ENCODE measurements at regions of chr22 and their contacts with region 1.

Region 1: DNA sequence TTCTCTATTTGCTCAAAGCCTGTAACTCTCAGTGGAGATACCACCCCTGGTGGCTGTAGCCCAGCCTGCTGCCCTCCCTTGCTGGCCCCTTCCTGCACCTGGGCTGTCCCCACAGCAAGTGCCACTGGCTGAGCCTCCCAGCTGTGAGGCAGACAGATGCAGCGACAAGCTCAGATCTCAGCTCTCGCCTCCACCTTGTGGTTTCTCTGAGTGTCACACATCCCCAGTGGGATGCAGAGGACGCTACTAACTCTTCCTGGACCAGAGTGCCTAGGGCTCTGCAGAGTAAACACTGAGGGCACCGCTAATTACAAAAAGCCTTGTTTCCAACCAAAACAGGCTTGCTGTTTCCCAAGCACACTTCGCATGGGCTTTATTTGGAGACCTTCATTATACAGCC is 8.9 kb downstream of the YPEL1 start:
- DNase-seq: peak in 6 of 9 experiments; percentile 30 to 70 (median 52)
- ATAC-seq: peak; percentile 89
- H3K4me3 ChIP-seq: no peak overlapping the region
- H3K4me3 Mint-ChIP-seq: no peak overlapping the region
- H3K27ac ChIP-seq: peak overlapping the region in 1 of 2 experiments; percentile 6
- H3K27ac Mint-ChIP-seq: no peak overlapping the region
- H3K4me1 ChIP-seq: no peaks in the 10 kb centered on the region
- H3K4me1 Mint-ChIP-seq: peaks cover 7% of the 10 kb centered on the region
- H3K27me3 ChIP-seq: no peaks in the 10 kb centered on the region
- H3K27me3 Mint-ChIP-seq: no peaks in the 10 kb centered on the region
- CTCF ChIP-seq: peak; percentile 46

Region 2: DNA sequence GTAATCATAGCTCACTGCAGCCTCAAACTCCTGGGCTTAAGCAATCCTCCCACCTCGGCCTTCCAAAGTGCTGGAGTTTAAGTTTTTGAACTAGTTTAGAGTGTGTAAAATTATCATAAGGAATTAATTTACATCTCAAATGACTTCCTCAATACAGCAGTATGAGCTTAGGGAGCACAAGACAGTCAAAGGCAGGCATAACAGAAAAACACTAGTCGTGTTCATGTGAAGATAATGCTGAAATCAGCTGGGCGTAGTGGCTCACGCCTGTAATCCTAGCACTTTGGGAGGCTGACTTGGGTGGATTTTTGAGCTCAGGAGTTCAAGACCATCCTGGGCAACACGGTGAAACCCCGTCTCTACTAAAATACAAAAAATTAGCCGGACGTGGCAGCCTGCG is 122.7 kb before region 1 on chr22:
- CTCF ChIA-PET with region 1: no interaction called
- POLR2A ChIA-PET with region 1: no interaction called
- intact Hi-C with region 1: no loop called
- DNase-seq: no peak
- ATAC-seq: no peak
- H3K4me3 ChIP-seq: no peak overlapping the region
- H3K4me3 Mint-ChIP-seq: no peak overlapping the region
- H3K27ac ChIP-seq: no peak overlapping the region
- H3K27ac Mint-ChIP-seq: no peak overlapping the region
- H3K4me1 ChIP-seq: no peaks in the 10 kb centered on the region
- H3K4me1 Mint-ChIP-seq: peaks cover 46% of the 10 kb centered on the region
- H3K27me3 ChIP-seq: no peaks in the 10 kb centered on the region
- H3K27me3 Mint-ChIP-seq: no peaks in the 10 kb centered on the region
- CTCF ChIP-seq: no peak

Region 3: DNA sequence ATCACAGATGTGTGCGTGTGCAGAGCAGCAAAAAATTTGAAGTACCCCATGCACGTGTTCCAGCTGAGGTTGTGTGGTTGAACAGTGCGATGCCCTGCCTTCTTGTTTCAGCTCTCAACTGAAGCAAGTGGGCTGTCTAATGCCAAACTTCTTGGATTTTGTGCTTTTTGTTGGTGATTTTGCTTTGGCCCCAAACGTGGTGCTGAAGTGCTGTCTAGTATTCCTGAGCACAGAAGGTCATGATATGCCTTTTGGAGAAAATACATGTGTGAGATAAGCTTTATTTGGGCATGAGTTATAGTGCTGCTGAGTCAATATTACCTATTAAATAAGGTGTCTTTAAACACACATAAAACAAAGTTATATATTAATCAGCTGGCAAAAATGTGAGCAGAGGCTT is 110.9 kb before region 1 on chr22:
- CTCF ChIA-PET with region 1: no interaction called
- POLR2A ChIA-PET with region 1: no interaction called
- intact Hi-C with region 1: no loop called
- DNase-seq: no peak
- ATAC-seq: no peak
- H3K4me3 ChIP-seq: no peak overlapping the region
- H3K4me3 Mint-ChIP-seq: no peak overlapping the region
- H3K27ac ChIP-seq: no peak overlapping the region
- H3K27ac Mint-ChIP-seq: no peak overlapping the region
- H3K4me1 ChIP-seq: no peaks in the 10 kb centered on the region
- H3K4me1 Mint-ChIP-seq: peaks cover 26% of the 10 kb centered on the region
- H3K27me3 ChIP-seq: no peaks in the 10 kb centered on the region
- H3K27me3 Mint-ChIP-seq: no peaks in the 10 kb centered on the region
- CTCF ChIP-seq: no peak

Region 4: DNA sequence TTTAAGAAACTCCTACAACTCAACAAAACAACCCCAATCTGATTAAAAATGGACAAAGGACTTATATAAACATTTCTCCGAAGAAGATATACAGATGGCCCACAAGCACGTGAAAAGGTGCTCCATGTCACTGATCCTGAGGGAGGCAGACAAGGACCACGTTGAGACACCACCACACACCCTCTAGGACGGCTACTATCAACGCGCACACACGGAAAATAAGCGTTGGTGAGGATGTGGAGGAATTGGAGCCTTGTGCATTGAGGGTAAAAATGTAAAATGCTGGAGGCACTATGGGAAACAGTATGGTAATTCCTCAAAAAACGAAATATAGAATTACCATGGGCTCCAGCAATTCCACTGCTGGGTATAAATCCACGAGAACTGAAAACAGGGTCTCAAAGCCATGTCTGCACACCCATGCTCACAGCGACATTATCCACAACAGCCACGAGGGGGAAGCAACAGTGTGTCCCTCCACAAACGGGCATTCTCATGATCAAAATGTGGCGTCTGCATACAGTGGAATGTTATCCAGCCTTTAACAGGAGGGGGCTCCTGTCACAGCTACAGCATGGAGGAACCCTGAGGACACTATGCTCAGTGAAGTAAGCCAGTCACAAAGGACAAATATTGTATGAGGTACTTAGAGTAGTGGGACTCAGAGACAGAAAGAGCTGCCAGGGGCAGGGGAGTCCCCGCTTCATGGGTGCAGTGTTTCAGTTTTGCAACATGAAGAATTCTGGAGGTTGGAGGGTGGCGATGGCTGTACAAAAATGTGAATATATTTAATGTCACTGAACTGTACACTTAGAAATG is 13.5 kb before region 1 on chr22:
- CTCF ChIA-PET with region 1: interaction called, 5 read pairs
- POLR2A ChIA-PET with region 1: no interaction called
- intact Hi-C with region 1: loop called in 1 of 2 experiments (anchors 1 kb)
- DNase-seq: peak in 8 of 9 experiments; percentile 39 to 80 (median 60)
- ATAC-seq: peak; percentile 96
- H3K4me3 ChIP-seq: no peak overlapping the region
- H3K4me3 Mint-ChIP-seq: peak overlapping the region; percentile 37
- H3K27ac ChIP-seq: no peak overlapping the region
- H3K27ac Mint-ChIP-seq: no peak overlapping the region
- H3K4me1 ChIP-seq: no peaks in the 10 kb centered on the region
- H3K4me1 Mint-ChIP-seq: peaks cover 5% of the 10 kb centered on the region
- H3K27me3 ChIP-seq: no peaks in the 10 kb centered on the region
- H3K27me3 Mint-ChIP-seq: no peaks in the 10 kb centered on the region
- CTCF ChIP-seq: peak; percentile 81